ENCODE measurements at regions of chr20 and their contacts with region 1.

Region 1: DNA sequence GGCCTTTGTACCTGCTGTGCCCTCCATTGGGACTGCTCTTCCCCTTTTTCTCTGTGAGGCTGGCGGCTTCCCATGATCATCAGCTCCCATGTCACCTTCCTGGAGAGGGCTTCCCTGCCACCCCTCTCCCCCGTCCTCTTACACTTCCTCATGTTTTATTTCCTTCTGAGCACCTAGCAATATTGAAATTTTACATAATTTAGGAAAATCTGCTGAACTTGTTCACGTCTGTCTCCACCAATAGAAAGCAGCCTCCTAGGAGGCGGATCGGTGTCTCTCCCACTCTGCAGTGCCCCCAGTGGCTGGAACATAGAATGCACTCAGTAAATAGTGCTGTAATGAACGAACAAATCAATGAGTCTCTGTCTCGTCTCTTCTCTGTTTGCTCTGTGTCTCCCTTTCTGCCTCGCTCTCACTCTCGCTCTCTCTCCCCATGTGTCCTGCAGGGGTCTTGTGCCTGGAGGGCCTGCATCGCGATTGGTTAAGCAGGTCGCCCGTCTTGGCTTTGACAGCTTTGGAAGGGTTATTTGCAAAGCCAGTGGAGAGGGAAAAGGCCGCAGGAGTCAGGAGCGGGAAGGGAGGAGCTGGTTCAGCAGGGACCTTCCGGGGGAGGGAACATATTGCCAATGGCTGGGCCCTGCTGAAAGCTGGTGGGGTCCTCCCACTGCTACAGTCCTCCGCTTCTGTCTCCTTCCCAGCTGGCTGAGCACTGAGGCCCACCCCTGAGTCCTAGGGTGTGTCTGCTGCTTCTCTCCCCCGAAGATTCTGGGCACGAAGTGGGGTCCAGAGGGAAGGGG is 12.1 kb upstream of the OCSTAMP start:
- DNase-seq: peak; percentile 80
- H3K4me3 ChIP-seq: peak overlapping the region in 1 of 3 experiments; percentile 3
- H3K27ac ChIP-seq: no peak overlapping the region
- H3K4me1 ChIP-seq: peaks cover 8% of the 10 kb centered on the region
- H3K27me3 ChIP-seq: no peaks in the 10 kb centered on the region
- CTCF ChIP-seq: peak; percentile 88 to 89
- POLR2A ChIP-seq: no peak

Region 2: GRCh38 chr20:46520976-46521579 is 41.5 kb before region 1 on chr20:
- CTCF ChIA-PET with region 1: interaction called, 3 read pairs
- POLR2A ChIA-PET with region 1: no interaction called
- dilution Hi-C with region 1: no loop called
- intact Hi-C with region 1: loop called (anchors 1 kb)
- DNase-seq: peak; percentile 47
- H3K4me3 ChIP-seq: no peak overlapping the region
- H3K27ac ChIP-seq: no peak overlapping the region
- H3K4me1 ChIP-seq: no peaks in the 10 kb centered on the region
- H3K27me3 ChIP-seq: no peaks in the 10 kb centered on the region
- CTCF ChIP-seq: peak; percentile 37 to 77
- POLR2A ChIP-seq: no peak

Region 3: DNA sequence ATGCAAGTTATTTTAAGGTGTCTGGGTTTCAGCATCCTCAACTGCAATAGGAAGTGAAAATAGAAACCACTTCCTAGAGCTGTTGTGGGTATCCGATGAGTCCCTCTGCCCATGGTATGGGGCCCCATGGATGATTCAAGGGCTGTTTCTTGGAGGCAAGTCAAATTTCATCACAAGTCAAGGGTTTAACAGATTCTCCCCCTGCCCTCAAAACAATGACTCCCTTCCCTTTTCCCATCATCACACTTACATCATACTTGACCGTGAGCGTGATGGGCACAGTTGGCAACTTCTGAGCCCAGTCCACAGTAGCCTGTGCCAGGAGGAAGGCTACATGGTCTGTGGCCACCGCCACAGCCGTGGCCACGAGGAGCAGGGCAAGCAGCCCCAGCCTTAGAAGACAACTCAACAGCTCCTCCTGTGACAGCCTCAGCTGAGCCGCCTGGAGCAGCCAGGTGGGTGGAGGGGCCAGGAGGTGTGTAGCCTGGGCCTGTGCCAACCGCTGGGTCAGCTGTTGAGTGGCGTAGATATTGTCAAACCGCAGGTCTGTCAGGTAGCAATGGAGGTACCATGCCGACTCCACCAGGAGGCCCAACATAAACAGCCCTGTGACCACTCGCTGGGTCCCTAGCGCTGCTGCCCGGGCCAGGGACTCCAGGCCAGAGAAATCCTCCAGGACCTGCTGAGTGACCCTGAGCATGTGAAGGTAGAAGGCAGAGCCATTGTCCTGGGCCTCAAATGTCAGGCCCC is 17.3 kb before region 1 on chr20:
- CTCF ChIA-PET with region 1: interaction called, 13 read pairs
- POLR2A ChIA-PET with region 1: interaction called, 3 read pairs
- dilution Hi-C with region 1: no loop called
- intact Hi-C with region 1: no loop called
- DNase-seq: no peak
- H3K4me3 ChIP-seq: no peak overlapping the region
- H3K27ac ChIP-seq: no peak overlapping the region
- H3K4me1 ChIP-seq: no peaks in the 10 kb centered on the region
- H3K27me3 ChIP-seq: no peaks in the 10 kb centered on the region
- CTCF ChIP-seq: no peak
- POLR2A ChIP-seq: no peak

Region 4: DNA sequence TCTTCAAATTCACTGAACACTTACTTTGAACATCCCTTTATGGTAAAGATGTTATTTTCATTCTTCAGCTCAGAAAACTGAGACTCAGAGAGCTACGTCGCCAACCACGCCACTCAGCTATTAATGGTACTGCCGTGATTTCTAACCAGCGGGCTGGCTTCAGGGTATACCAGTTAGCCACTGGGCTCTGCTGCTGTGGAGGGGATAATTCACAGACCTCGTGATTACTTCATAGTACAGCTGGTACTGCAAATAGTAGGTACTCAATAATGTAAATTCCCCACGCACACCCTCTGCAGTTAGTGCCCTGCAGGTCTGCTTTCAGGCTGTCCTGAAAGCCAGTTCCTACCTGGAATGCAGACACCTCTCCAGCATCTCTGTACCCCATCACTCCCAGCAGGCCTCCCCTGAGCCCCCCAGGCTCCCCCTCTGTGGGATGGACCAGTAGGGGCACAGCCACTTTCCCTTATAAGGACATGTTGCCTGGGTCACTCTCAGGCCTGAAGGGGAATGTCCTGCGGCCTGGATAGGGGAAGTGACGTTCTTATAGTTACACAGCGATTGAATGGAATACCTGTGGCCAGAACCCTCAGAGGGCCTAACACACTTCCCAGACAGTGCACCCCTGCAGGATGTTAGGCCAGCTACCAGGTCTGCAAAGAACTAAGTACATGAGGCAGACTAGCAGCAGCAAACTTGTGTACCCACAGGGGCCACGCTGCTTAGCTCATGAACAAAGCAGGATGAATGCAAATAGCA is 10.9 kb before region 1 on chr20:
- CTCF ChIA-PET with region 1: interaction called, 13 read pairs
- POLR2A ChIA-PET with region 1: no interaction called
- dilution Hi-C with region 1: no loop called
- intact Hi-C with region 1: no loop called
- DNase-seq: no peak
- H3K4me3 ChIP-seq: no peak overlapping the region
- H3K27ac ChIP-seq: no peak overlapping the region
- H3K4me1 ChIP-seq: no peaks in the 10 kb centered on the region
- H3K27me3 ChIP-seq: no peaks in the 10 kb centered on the region
- CTCF ChIP-seq: no peak
- POLR2A ChIP-seq: no peak

Region 5: GRCh38 chr20:46681032-46681854 is 118.7 kb after region 1 on chr20:
- CTCF ChIA-PET with region 1: interaction called, 9 read pairs
- POLR2A ChIA-PET with region 1: no interaction called
- dilution Hi-C with region 1: no loop called
- intact Hi-C with region 1: loop called (anchors 2 kb)
- DNase-seq: peak; percentile 52
- H3K4me3 ChIP-seq: no peak overlapping the region
- H3K27ac ChIP-seq: no peak overlapping the region
- H3K4me1 ChIP-seq: peaks cover 3% of the 10 kb centered on the region
- H3K27me3 ChIP-seq: no peaks in the 10 kb centered on the region
- CTCF ChIP-seq: peak; percentile 69 to 75
- POLR2A ChIP-seq: no peak

Region 6: GRCh38 chr20:46689082-46689754 is 126.6 kb after region 1 on chr20 and contains the start of gene TP53RK:
- CTCF ChIA-PET with region 1: interaction called, 6 read pairs
- POLR2A ChIA-PET with region 1: interaction called, 4 read pairs
- dilution Hi-C with region 1: no loop called
- intact Hi-C with region 1: loop called (anchors 1 kb)
- DNase-seq: peak; percentile 100
- H3K4me3 ChIP-seq: peak within 1 kb of the TSS; percentile 62 to 91 (median 90)
- H3K27ac ChIP-seq: peak within 1 kb of the TSS; percentile 55
- H3K4me1 ChIP-seq: peaks cover 16% of the 10 kb centered on the region
- H3K27me3 ChIP-seq: no peaks in the 10 kb centered on the region
- CTCF ChIP-seq: peak; percentile 7 to 33
- POLR2A ChIP-seq: peak; percentile 92
- total RNA-seq, gene TP53RK: 11.8 and 13.1 TPM in 2 replicates

Measured in endothelial cell of umbilical vein (primary cell).